Posterior vena cava (tissue), 2 donors: ENCODE measurements at regions of chrX and their contacts with region 1.

Region 1: GRCh38 chrX:101942889-101943288 is 11.1 kb upstream of the ZMAT1 start:
- DNase-seq: no peak

Region 2: GRCh38 chrX:101906136-101906796 is 36.6 kb before region 1 on chrX:
- intact Hi-C with region 1: no loop called
- DNase-seq: peak; percentile 59

Region 3: DNA sequence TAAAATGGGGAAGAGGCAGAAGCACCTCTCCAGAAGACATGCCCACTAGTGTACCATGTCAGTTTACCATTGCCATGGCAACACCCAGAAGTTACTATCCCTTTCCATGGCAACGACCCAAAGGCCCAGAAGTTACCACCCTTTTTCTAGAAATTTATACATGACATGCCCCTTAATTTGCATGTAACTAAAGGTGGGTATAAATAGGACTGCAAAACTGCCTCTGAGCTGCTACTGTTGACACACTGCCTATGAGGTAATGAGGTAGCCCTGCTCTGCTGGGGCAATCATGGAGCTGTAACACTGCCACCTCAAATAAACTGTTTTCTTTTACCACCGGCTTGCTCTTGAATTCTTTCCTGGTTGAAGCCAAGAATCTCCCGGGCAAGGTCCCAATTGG is 1258.2 kb after region 1 on chrX:
- intact Hi-C with region 1: loop called in 1 of 2 experiments (anchors 5 kb)
- DNase-seq: no peak